HCT116 (cell line): ENCODE measurements at regions of chr13 and their contacts with region 1.

Region 1: GRCh38 chr13:35978603-35979316 is 152.4 kb downstream of the DCLK1 start:
- DNase-seq: peak; percentile 29
- ATAC-seq: no peak
- H3K4me3 ChIP-seq: no peak overlapping the region
- H3K27ac ChIP-seq: no peak overlapping the region
- H3K4me1 ChIP-seq: no peaks in the 10 kb centered on the region
- H3K27me3 ChIP-seq: no peaks in the 10 kb centered on the region
- CTCF ChIP-seq: peak; percentile 18 to 80 (median 57); a peak in 5 of 6 replicates
- POLR2A ChIP-seq: no peak
- RAD21 ChIP-seq: peak; percentile 62

Region 2: GRCh38 chr13:36096461-36097416 is 118.0 kb after region 1 on chr13:
- CTCF ChIA-PET with region 1: no interaction called
- POLR2A ChIA-PET with region 1: no interaction called
- RAD21 ChIA-PET with region 1: no interaction called
- intact Hi-C with region 1: no loop called
- DNase-seq: no peak
- ATAC-seq: no peak
- H3K4me3 ChIP-seq: no peak overlapping the region
- H3K27ac ChIP-seq: no peak overlapping the region
- H3K4me1 ChIP-seq: no peaks in the 10 kb centered on the region
- H3K27me3 ChIP-seq: no peaks in the 10 kb centered on the region
- CTCF ChIP-seq: no peak
- POLR2A ChIP-seq: no peak
- RAD21 ChIP-seq: no peak

Region 3: DNA sequence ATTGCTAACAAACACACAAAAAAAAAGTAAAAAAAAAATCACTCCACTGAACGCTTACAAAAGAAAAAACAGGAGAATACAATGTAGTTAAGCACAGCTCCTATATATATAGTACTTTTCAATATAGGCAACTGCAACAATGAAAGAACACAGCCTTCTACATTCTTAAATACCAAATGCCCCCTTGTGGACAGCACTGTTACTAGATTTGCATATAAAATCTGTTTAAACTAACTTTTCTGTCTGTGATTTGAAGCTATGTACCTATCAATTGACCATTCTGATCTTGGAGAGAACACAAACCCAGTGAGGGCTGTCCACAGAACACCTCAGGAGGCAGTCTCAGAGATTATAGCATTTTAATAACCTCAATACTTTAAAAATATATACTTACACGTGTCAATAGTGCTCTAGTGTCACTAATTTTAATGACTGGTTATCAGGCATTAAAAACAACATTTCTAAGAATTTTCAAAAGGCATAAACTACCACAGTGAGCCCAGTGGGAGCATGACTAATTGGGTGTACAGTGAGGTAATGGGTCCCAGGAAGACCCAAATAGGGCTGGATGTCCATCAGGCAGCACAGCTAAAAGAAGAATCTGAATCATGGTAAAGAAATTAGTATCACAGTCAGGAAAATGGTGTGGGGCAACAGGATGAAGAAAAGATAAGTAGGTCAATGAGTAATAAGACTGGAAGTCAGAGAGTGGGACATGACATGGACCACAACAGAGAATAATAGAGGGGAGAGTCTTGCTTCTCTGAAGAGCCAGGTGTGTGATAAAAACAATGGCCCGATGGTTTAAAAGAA is 296.6 kb after region 1 on chr13:
- CTCF ChIA-PET with region 1: interaction called, 26 read pairs
- POLR2A ChIA-PET with region 1: no interaction called
- RAD21 ChIA-PET with region 1: no interaction called
- intact Hi-C with region 1: loop called (anchors 5 kb)
- DNase-seq: no peak
- ATAC-seq: no peak
- H3K4me3 ChIP-seq: no peak overlapping the region
- H3K27ac ChIP-seq: no peak overlapping the region
- H3K4me1 ChIP-seq: no peaks in the 10 kb centered on the region
- H3K27me3 ChIP-seq: no peaks in the 10 kb centered on the region
- CTCF ChIP-seq: peak in 2 of 3 experiments; percentile 20 to 37; a peak in 3 of 6 replicates
- POLR2A ChIP-seq: no peak
- RAD21 ChIP-seq: no peak

Region 4: GRCh38 chr13:36736119-36736726 is 757.5 kb after region 1 on chr13:
- CTCF ChIA-PET with region 1: interaction called, 10 read pairs
- POLR2A ChIA-PET with region 1: no interaction called
- RAD21 ChIA-PET with region 1: no interaction called
- intact Hi-C with region 1: loop called (anchors 2 kb)
- DNase-seq: peak; percentile 31
- ATAC-seq: peak; percentile 61; the same call in 1 of the 2 replicates
- H3K4me3 ChIP-seq: no peak overlapping the region
- H3K27ac ChIP-seq: no peak overlapping the region
- H3K4me1 ChIP-seq: no peaks in the 10 kb centered on the region
- H3K27me3 ChIP-seq: no peaks in the 10 kb centered on the region
- CTCF ChIP-seq: peak; percentile 23 to 78 (median 63); a peak in 4 of 6 replicates
- POLR2A ChIP-seq: no peak
- RAD21 ChIP-seq: peak; percentile 29; the same call in 1 of the 2 replicates

Region 5: GRCh38 chr13:36981156-36981743 is 1002.5 kb after region 1 on chr13:
- CTCF ChIA-PET with region 1: no interaction called
- POLR2A ChIA-PET with region 1: no interaction called
- RAD21 ChIA-PET with region 1: no interaction called
- intact Hi-C with region 1: loop called (anchors 5 kb)
- DNase-seq: no peak
- ATAC-seq: peak; percentile 54
- H3K4me3 ChIP-seq: no peak overlapping the region
- H3K27ac ChIP-seq: no peak overlapping the region
- H3K4me1 ChIP-seq: no peaks in the 10 kb centered on the region
- H3K27me3 ChIP-seq: no peaks in the 10 kb centered on the region
- CTCF ChIP-seq: peak; percentile 30 to 63 (median 37); a peak in 4 of 6 replicates
- POLR2A ChIP-seq: no peak
- RAD21 ChIP-seq: peak; percentile 51; the same call in 1 of the 2 replicates

Region 6: GRCh38 chr13:37068962-37069361 is 1090.2 kb after region 1 on chr13:
- CTCF ChIA-PET with region 1: no interaction called
- POLR2A ChIA-PET with region 1: no interaction called
- RAD21 ChIA-PET with region 1: no interaction called
- intact Hi-C with region 1: loop called (anchors 2 kb)
- DNase-seq: peak; percentile 0
- ATAC-seq: peak; percentile 59; the same call in 1 of the 2 replicates
- H3K4me3 ChIP-seq: no peak overlapping the region
- H3K27ac ChIP-seq: no peak overlapping the region
- H3K4me1 ChIP-seq: no peaks in the 10 kb centered on the region
- H3K27me3 ChIP-seq: no peaks in the 10 kb centered on the region
- CTCF ChIP-seq: peak; percentile 13 to 38 (median 26); a peak in 4 of 6 replicates
- POLR2A ChIP-seq: no peak
- RAD21 ChIP-seq: peak; percentile 54